T-cell (primary cell): ENCODE measurements at regions of chr14 and their contacts with region 1.

Region 1: GRCh38 chr14:62126879-62127478 is 364.8 kb downstream of the SNAPC1 start:
- DNase-seq: peak in 4 of 35 experiments; percentile 6 to 64 (median 11)
- ATAC-seq: peak in 3 of 4 experiments; percentile 45 to 71 (median 55)
- H3K4me3 ChIP-seq: no peak overlapping the region
- H3K4me3 Mint-ChIP-seq: no peak overlapping the region
- H3K27ac ChIP-seq: no peak overlapping the region
- H3K27ac Mint-ChIP-seq: no peak overlapping the region
- H3K4me1 ChIP-seq: no peaks in the 10 kb centered on the region
- H3K4me1 Mint-ChIP-seq: no peaks in the 10 kb centered on the region
- H3K27me3 ChIP-seq: peaks cover 0 to under 1% of the 10 kb centered on the region in 2 experiments
- H3K27me3 Mint-ChIP-seq: peaks cover 48 to 61% of the 10 kb centered on the region in 2 donors

Region 2: DNA sequence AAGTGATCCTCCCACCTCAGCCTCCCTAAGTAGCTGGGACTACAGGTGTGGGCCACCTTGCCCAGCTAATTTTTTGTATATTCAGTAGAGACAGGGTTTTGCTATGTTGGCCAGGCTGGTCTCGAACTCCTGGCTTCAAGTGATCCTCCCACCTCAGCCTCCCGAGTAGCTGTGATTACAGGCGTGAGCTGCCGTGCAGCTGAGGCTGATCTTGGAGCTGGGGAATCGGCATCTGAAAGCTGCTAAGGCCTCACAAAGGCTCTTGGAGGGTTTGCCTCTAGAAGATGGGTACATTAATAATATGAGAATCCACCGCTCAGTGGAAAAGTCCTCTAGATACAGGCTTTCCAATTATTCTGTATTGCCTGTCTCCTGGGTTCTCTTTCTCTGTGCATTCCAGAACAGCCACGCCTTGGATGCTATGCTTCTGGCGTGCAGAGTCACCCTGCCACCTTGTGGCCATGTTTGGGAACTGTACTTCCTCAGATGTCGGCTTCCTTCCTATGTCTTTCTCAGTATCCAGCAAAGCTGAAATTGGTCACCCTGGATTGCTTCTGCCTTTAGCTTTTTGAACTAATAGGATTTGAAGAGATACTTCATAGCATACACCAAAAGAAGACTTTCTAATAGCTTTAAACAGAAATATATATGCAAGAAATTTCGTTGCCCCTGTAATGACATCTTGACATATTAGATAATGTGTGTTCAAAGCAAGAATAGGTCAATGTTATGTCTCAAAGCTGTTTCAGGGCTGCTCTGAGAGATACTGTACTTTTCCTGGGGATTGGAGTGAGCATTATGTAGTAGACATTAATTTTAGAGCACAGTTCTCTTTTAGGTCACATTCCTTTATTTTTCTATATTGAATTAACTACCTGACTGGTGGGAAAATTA is 289.4 kb before region 1 on chr14:
- CTCF ChIA-PET with region 1: interaction called, 4 to 10 read pairs
- POLR2A ChIA-PET with region 1: no interaction called
- DNase-seq: peak; percentile 29 to 89 (median 63)
- ATAC-seq: peak; percentile 80 to 95 (median 92)
- H3K4me3 ChIP-seq: no peak overlapping the region
- H3K4me3 Mint-ChIP-seq: no peak overlapping the region
- H3K27ac ChIP-seq: no peak overlapping the region
- H3K27ac Mint-ChIP-seq: no peak overlapping the region
- H3K4me1 ChIP-seq: no peaks in the 10 kb centered on the region
- H3K4me1 Mint-ChIP-seq: peaks cover 0 to 5% (median 0%) of the 10 kb centered on the region in 3 donors
- H3K27me3 ChIP-seq: peaks cover 0 to 4% of the 10 kb centered on the region in 2 experiments
- H3K27me3 Mint-ChIP-seq: peaks cover 0 to 4% of the 10 kb centered on the region in 2 donors

Region 3: GRCh38 chr14:61860294-61860918 is 266.6 kb before region 1 on chr14:
- CTCF ChIA-PET with region 1: interaction called, 3 to 11 read pairs
- POLR2A ChIA-PET with region 1: no interaction called
- DNase-seq: peak; percentile 5 to 64 (median 43)
- ATAC-seq: peak; percentile 75 to 94 (median 88)
- H3K4me3 ChIP-seq: no peak overlapping the region
- H3K4me3 Mint-ChIP-seq: no peak overlapping the region
- H3K27ac ChIP-seq: no peak overlapping the region
- H3K27ac Mint-ChIP-seq: no peak overlapping the region
- H3K4me1 ChIP-seq: no peaks in the 10 kb centered on the region
- H3K4me1 Mint-ChIP-seq: peaks cover 0 to 10% (median 0%) of the 10 kb centered on the region in 3 donors
- H3K27me3 ChIP-seq: peaks cover 0 to 4% of the 10 kb centered on the region in 2 experiments
- H3K27me3 Mint-ChIP-seq: peaks cover 15 to 18% of the 10 kb centered on the region in 2 donors

Region 4: DNA sequence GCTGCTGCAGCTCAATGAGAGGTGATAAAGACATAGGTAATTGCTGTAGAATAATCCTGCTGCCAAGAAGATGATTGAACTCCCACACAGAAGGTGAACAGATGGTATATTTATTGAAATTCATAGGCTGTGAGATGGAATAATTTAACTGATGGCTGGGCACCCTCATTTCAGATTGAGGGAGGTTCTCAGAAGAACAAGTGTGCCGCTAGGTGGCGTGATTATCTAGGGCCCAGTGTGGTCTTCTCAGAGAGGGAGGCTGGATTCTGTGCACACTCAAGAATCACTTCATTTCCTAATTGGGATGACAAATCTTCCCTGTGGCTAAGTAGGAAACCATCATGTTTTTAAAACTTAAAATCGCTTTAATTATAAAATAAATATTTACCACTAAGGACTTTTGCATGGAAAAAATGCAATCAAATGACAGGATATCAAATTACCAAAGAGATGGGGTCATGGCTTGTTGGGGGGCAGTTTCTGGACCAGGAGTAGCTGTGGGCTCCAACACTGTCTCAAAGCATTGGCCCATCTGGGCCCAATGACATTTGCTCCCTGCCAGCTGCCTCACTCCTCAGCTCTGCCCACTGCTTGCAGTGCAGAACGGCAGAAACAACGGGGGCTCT is 232.4 kb before region 1 on chr14:
- CTCF ChIA-PET with region 1: interaction called, 7 to 11 read pairs
- POLR2A ChIA-PET with region 1: no interaction called
- DNase-seq: peak in 33 of 35 experiments; percentile 6 to 71 (median 40)
- ATAC-seq: peak in 1 of 4 experiments; percentile 50
- H3K4me3 ChIP-seq: no peak overlapping the region
- H3K4me3 Mint-ChIP-seq: no peak overlapping the region
- H3K27ac ChIP-seq: no peak overlapping the region
- H3K27ac Mint-ChIP-seq: no peak overlapping the region
- H3K4me1 ChIP-seq: peaks cover 2 to 7% of the 10 kb centered on the region in 2 experiments
- H3K4me1 Mint-ChIP-seq: peaks cover 10 to 17% (median 11%) of the 10 kb centered on the region in 3 donors
- H3K27me3 ChIP-seq: peaks cover 0 to 4% of the 10 kb centered on the region in 2 experiments
- H3K27me3 Mint-ChIP-seq: no peaks in the 10 kb centered on the region

Region 5: GRCh38 chr14:61925043-61925442 is 201.9 kb before region 1 on chr14:
- CTCF ChIA-PET with region 1: interaction called, 29 to 43 read pairs
- POLR2A ChIA-PET with region 1: no interaction called
- DNase-seq: peak in 9 of 35 experiments; percentile 0 to 41 (median 3)
- ATAC-seq: peak in 1 of 4 experiments; percentile 35
- H3K4me3 ChIP-seq: no peak overlapping the region
- H3K4me3 Mint-ChIP-seq: no peak overlapping the region
- H3K27ac ChIP-seq: no peak overlapping the region
- H3K27ac Mint-ChIP-seq: no peak overlapping the region
- H3K4me1 ChIP-seq: no peaks in the 10 kb centered on the region
- H3K4me1 Mint-ChIP-seq: no peaks in the 10 kb centered on the region
- H3K27me3 ChIP-seq: no peaks in the 10 kb centered on the region
- H3K27me3 Mint-ChIP-seq: peaks cover 15 to 40% of the 10 kb centered on the region in 2 donors